SK-N-SH (cell line): ENCODE measurements at regions of chr6 and their contacts with region 1.

Region 1: GRCh38 chr6:30396833-30397479 is 52.0 kb downstream of the RPP21 start:
- DNase-seq: peak; percentile 86
- H3K4me3 ChIP-seq: peak overlapping the region in 1 of 2 experiments; percentile 49; a peak in 1 of 4 replicates
- H3K27ac ChIP-seq: no peak overlapping the region
- H3K4me1 ChIP-seq: no peaks in the 10 kb centered on the region; a peak in 1 of 4 replicates
- H3K27me3 ChIP-seq: peaks cover 50% of the 10 kb centered on the region
- CTCF ChIP-seq: peak; percentile 88
- EP300 ChIP-seq: no peak
- RAD21 ChIP-seq: peak; percentile 79

Region 2: GRCh38 chr6:30091577-30092381 is 305.2 kb before region 1 on chr6:
- CTCF ChIA-PET with region 1: no interaction called
- POLR2A ChIA-PET with region 1: no interaction called
- DNase-seq: no peak
- H3K4me3 ChIP-seq: no peak overlapping the region
- H3K27ac ChIP-seq: no peak overlapping the region
- H3K4me1 ChIP-seq: no peaks in the 10 kb centered on the region
- H3K27me3 ChIP-seq: peaks cover 56% of the 10 kb centered on the region
- CTCF ChIP-seq: no peak
- EP300 ChIP-seq: no peak
- RAD21 ChIP-seq: no peak

Region 3: DNA sequence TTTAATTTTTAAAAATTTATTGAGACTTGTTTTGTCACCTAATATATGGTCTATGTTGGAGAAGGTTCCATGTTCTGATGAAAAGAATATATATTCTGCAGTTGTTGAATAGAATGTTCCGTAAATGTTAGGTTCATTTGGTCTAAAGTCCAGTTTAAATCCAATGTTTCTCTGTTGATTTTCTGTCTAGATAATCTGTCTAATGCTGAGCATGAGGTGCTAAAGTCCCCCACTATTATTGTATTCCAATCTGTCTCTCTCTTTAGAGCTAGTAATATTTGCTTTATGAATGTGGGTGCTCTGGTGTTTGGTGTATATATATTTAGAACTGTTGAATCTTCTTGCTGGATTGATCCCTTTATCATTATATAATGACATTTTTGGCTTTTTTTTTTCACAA is 218.1 kb before region 1 on chr6:
- CTCF ChIA-PET with region 1: no interaction called
- POLR2A ChIA-PET with region 1: no interaction called
- DNase-seq: no peak
- H3K4me3 ChIP-seq: no peak overlapping the region
- H3K27ac ChIP-seq: no peak overlapping the region
- H3K4me1 ChIP-seq: no peaks in the 10 kb centered on the region
- H3K27me3 ChIP-seq: peaks cover 8% of the 10 kb centered on the region
- CTCF ChIP-seq: no peak
- EP300 ChIP-seq: no peak
- RAD21 ChIP-seq: no peak

Region 4: GRCh38 chr6:30238174-30238795 is 158.7 kb before region 1 on chr6:
- CTCF ChIA-PET with region 1: interaction called, 12 read pairs
- POLR2A ChIA-PET with region 1: no interaction called
- DNase-seq: peak; percentile 44
- H3K4me3 ChIP-seq: no peak overlapping the region
- H3K27ac ChIP-seq: no peak overlapping the region
- H3K4me1 ChIP-seq: no peaks in the 10 kb centered on the region
- H3K27me3 ChIP-seq: no peaks in the 10 kb centered on the region
- CTCF ChIP-seq: peak; percentile 29; the same call in 1 of the 2 replicates
- EP300 ChIP-seq: no peak
- RAD21 ChIP-seq: peak; percentile 60

Region 5: GRCh38 chr6:30357678-30358540 is 39.0 kb before region 1 on chr6:
- CTCF ChIA-PET with region 1: interaction called, 35 read pairs
- POLR2A ChIA-PET with region 1: no interaction called
- DNase-seq: peak; percentile 76
- H3K4me3 ChIP-seq: peak overlapping the region; percentile 36 to 46
- H3K27ac ChIP-seq: no peak overlapping the region
- H3K4me1 ChIP-seq: peaks cover 0 to 4% of the 10 kb centered on the region in 2 experiments; a peak in 1 of 4 replicates
- H3K27me3 ChIP-seq: peaks cover 58% of the 10 kb centered on the region; the same call in 1 of the 2 replicates
- CTCF ChIP-seq: peak; percentile 86
- EP300 ChIP-seq: no peak
- RAD21 ChIP-seq: peak; percentile 75